PC-3 (cell line): ENCODE measurements at regions of chr10 and their contacts with region 1.

Region 1: GRCh38 chr10:92763634-92764155 is 73.9 kb downstream of the HHEX start:
- DNase-seq: no peak
- ATAC-seq: no peak
- H3K4me3 ChIP-seq: no peak overlapping the region
- H3K27ac ChIP-seq: no peak overlapping the region
- H3K4me1 ChIP-seq: peaks cover 6% of the 10 kb centered on the region
- H3K27me3 ChIP-seq: no peaks in the 10 kb centered on the region
- CTCF ChIP-seq: no peak

Region 2: DNA sequence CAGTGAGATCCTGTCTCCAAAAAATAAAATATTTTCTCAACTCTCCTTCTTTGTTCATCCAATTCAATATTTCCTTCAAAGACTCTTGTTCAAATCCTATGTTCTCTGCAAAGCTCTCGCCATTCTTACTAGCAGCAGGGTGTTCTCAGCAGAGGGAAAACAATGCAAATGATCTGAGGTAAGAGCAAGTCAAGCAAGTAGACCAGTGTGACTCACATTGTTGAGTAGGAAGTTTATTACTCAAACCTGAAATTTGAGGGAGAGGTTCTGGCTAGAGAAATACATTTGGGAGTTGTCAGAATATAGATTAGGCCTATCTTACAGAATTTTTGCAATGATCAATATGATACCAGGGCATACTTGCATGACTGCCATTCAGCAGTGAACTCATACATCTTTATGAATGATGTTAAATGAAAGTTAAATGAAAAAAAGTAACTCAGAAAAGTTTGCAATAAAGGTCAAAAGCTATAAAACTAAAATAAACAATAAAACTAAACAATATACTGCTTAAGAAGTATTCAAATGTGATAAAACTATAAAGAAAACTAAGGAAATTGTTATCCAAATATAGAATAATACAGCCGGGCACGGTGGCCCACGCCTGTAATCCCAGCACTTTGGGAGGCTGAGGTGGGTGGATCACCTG is 195.6 kb before region 1 on chr10:
- CTCF ChIA-PET with region 1: no interaction called
- POLR2A ChIA-PET with region 1: interaction called, 10 read pairs
- intact Hi-C with region 1: no loop called
- DNase-seq: peak; percentile 73
- ATAC-seq: peak; percentile 86
- H3K4me3 ChIP-seq: no peak overlapping the region
- H3K27ac ChIP-seq: peak overlapping the region; percentile 30
- H3K4me1 ChIP-seq: peaks cover 32% of the 10 kb centered on the region
- H3K27me3 ChIP-seq: no peaks in the 10 kb centered on the region
- CTCF ChIP-seq: no peak

Region 3: GRCh38 chr10:93039721-93040120 is 276.0 kb after region 1 on chr10:
- CTCF ChIA-PET with region 1: no interaction called
- POLR2A ChIA-PET with region 1: no interaction called
- intact Hi-C with region 1: no loop called
- DNase-seq: peak; percentile 59
- ATAC-seq: peak; percentile 80
- H3K4me3 ChIP-seq: no peak overlapping the region
- H3K27ac ChIP-seq: no peak overlapping the region
- H3K4me1 ChIP-seq: no peaks in the 10 kb centered on the region
- H3K27me3 ChIP-seq: no peaks in the 10 kb centered on the region
- CTCF ChIP-seq: peak; percentile 64